Activated naive CD4-positive, alpha-beta T cell treated with anti-CD3 and anti-CD28 coated beads, Interleukin-2, amount 10 ng/mL, durations not matched to agents 7 days and 5 days (primary cell): ENCODE measurements at regions of chr1 and their contacts with region 1.

Region 1: GRCh38 chr1:103106426-103107341 is 1.6 kb downstream of the COL11A1 start:
- DNase-seq: no peak
- H3K4me3 Mint-ChIP-seq: no peak overlapping the region
- H3K27ac Mint-ChIP-seq: no peak overlapping the region
- H3K4me1 Mint-ChIP-seq: peaks cover 2% of the 10 kb centered on the region
- H3K27me3 Mint-ChIP-seq: peaks cover 30% of the 10 kb centered on the region

Region 2: GRCh38 chr1:103084181-103084580 is 22.5 kb before region 1 on chr1:
- CTCF ChIA-PET with region 1: no interaction called
- DNase-seq: no peak
- H3K4me3 Mint-ChIP-seq: no peak overlapping the region
- H3K27ac Mint-ChIP-seq: no peak overlapping the region
- H3K4me1 Mint-ChIP-seq: no peaks in the 10 kb centered on the region
- H3K27me3 Mint-ChIP-seq: no peaks in the 10 kb centered on the region

Region 3: GRCh38 chr1:103461161-103462105 is 354.7 kb after region 1 on chr1:
- CTCF ChIA-PET with region 1: interaction called, 15 read pairs
- DNase-seq: no peak
- H3K4me3 Mint-ChIP-seq: no peak overlapping the region
- H3K27ac Mint-ChIP-seq: no peak overlapping the region
- H3K4me1 Mint-ChIP-seq: no peaks in the 10 kb centered on the region
- H3K27me3 Mint-ChIP-seq: no peaks in the 10 kb centered on the region

Region 4: DNA sequence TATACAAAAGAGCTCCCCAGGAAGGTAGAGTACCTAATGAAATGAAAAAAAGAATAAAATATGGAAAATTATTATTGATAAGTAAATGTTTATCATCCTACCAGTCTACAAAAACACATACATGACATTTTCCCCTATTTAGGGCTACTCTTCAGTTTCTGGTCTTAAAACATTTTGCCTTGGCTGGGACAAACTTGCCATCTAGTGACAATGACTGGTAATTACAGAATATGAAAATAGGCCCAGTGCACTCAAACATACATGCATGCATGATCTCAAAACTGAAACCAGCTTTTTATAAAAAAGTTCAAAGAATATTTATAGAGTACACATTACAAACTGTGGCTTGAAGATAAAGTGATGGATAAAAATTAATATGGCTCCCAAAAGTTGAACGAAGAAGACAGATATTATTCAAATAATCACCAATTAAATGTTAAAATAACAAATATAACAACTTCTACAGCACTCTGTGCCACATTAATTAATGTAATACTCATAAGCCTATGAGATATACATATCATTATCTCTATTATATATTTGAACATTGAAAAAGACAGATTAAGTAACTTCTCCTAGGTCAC is 408.3 kb after region 1 on chr1:
- CTCF ChIA-PET with region 1: interaction called, 12 read pairs
- DNase-seq: no peak
- H3K4me3 Mint-ChIP-seq: no peak overlapping the region
- H3K27ac Mint-ChIP-seq: no peak overlapping the region
- H3K4me1 Mint-ChIP-seq: peaks cover 2% of the 10 kb centered on the region
- H3K27me3 Mint-ChIP-seq: no peaks in the 10 kb centered on the region